A673 (cell line): ENCODE measurements at regions of chr1 and their contacts with region 1.

Region 1: GRCh38 chr1:59759156-59759925 is 55.4 kb upstream of the HOOK1 start:
- DNase-seq: peak; percentile 93
- H3K4me3 ChIP-seq: no peak overlapping the region
- H3K27ac ChIP-seq: no peak overlapping the region
- H3K4me1 ChIP-seq: peaks cover 30% of the 10 kb centered on the region
- H3K27me3 ChIP-seq: no peaks in the 10 kb centered on the region
- CTCF ChIP-seq: peak; percentile 97

Region 2: DNA sequence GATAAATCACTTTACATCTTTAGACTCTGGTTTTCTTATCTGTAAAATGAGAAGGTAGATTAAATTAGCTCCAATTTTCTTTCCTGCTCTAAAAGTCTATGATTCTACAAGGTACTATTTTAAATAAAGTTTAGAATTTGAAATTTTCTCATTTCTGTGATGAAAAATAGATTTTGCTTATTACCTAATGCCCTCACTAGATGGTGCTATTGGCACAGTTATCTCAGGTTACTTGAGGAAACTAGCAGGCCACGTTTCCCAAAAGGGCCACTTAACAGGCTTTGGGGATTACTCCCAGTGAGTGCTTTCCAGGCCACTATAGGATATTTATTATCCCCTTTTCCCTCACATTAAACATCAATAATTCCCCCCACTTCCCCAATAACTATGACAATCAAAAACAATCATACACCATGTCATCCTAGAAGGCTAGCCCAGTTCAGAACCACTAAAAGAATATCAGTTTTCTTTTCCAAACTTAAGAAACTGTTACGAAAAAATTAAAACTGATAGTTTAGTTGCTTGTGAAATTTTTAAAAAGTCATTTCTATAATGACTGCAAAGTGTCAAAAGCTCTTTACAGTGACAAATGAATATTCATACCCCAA is 1243.4 kb before region 1 on chr1:
- CTCF ChIA-PET with region 1: no interaction called
- POLR2A ChIA-PET with region 1: no interaction called
- intact Hi-C with region 1: loop called (anchors 5 kb)
- DNase-seq: peak; percentile 87
- H3K4me3 ChIP-seq: no peak overlapping the region
- H3K27ac ChIP-seq: no peak overlapping the region
- H3K4me1 ChIP-seq: peaks cover 5% of the 10 kb centered on the region
- H3K27me3 ChIP-seq: no peaks in the 10 kb centered on the region
- CTCF ChIP-seq: peak; percentile 76

Region 3: GRCh38 chr1:58739856-58740466 is 1019.4 kb before region 1 on chr1:
- CTCF ChIA-PET with region 1: no interaction called
- POLR2A ChIA-PET with region 1: no interaction called
- intact Hi-C with region 1: loop called (anchors 5 kb)
- DNase-seq: peak; percentile 82
- H3K4me3 ChIP-seq: no peak overlapping the region
- H3K27ac ChIP-seq: no peak overlapping the region
- H3K4me1 ChIP-seq: peaks cover 4% of the 10 kb centered on the region
- H3K27me3 ChIP-seq: no peaks in the 10 kb centered on the region
- CTCF ChIP-seq: peak; percentile 89

Region 4: GRCh38 chr1:58783993-58784757 is 975.2 kb before region 1 on chr1 and contains the start of gene JUN:
- CTCF ChIA-PET with region 1: no interaction called
- POLR2A ChIA-PET with region 1: no interaction called
- intact Hi-C with region 1: loop called (anchors 1 kb)
- DNase-seq: peak; percentile 99
- H3K4me3 ChIP-seq: peak within 1 kb of the TSS; percentile 63
- H3K27ac ChIP-seq: peak within 1 kb of the TSS; percentile 87
- H3K4me1 ChIP-seq: peaks cover 32% of the 10 kb centered on the region
- H3K27me3 ChIP-seq: peaks cover 3% of the 10 kb centered on the region
- CTCF ChIP-seq: no peak
- total RNA-seq, gene JUN: 16.9 and 24.9 TPM in 2 replicates

Region 5: DNA sequence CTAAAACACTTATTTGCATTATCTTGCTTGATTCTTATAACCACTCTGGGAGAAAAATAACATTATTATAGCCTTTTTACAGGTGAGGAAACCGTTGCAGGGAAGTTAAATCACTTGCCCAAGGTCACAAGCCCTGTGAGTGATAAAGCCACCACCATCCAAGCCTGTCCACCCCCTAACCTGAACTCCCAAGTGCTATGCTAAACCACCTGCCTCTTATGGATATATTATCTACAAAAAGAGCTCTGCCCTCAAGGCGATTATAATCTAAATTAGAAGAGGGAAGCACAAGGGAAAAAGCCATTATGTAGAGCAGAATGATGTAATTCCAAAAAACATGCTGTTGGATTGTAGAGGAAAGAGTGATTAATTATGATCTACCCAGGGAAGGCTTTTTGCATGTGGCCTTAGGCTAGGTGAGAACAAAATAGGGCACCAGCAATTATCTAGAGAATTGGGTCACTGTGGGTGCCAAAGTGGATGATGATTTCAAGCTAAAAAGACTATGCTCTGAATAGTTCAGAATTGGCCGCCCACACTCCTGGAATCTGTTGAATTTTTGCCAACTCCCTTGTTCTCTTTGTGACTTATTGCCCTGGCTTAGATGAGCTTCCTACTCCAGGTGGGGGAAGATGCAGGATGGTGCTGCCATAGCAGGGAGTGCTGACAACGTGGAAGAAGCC is 257.2 kb before region 1 on chr1:
- CTCF ChIA-PET with region 1: no interaction called
- POLR2A ChIA-PET with region 1: interaction called, 11 read pairs
- intact Hi-C with region 1: no loop called
- DNase-seq: peak; percentile 41
- H3K4me3 ChIP-seq: no peak overlapping the region
- H3K27ac ChIP-seq: no peak overlapping the region
- H3K4me1 ChIP-seq: peaks cover 24% of the 10 kb centered on the region
- H3K27me3 ChIP-seq: no peaks in the 10 kb centered on the region
- CTCF ChIP-seq: no peak

Region 6: GRCh38 chr1:59511476-59512465 is 247.6 kb before region 1 on chr1:
- CTCF ChIA-PET with region 1: no interaction called
- POLR2A ChIA-PET with region 1: no interaction called
- intact Hi-C with region 1: loop called (anchors 10 kb)
- DNase-seq: no peak
- H3K4me3 ChIP-seq: no peak overlapping the region
- H3K27ac ChIP-seq: no peak overlapping the region
- H3K4me1 ChIP-seq: no peaks in the 10 kb centered on the region
- H3K27me3 ChIP-seq: no peaks in the 10 kb centered on the region
- CTCF ChIP-seq: no peak

Region 7: DNA sequence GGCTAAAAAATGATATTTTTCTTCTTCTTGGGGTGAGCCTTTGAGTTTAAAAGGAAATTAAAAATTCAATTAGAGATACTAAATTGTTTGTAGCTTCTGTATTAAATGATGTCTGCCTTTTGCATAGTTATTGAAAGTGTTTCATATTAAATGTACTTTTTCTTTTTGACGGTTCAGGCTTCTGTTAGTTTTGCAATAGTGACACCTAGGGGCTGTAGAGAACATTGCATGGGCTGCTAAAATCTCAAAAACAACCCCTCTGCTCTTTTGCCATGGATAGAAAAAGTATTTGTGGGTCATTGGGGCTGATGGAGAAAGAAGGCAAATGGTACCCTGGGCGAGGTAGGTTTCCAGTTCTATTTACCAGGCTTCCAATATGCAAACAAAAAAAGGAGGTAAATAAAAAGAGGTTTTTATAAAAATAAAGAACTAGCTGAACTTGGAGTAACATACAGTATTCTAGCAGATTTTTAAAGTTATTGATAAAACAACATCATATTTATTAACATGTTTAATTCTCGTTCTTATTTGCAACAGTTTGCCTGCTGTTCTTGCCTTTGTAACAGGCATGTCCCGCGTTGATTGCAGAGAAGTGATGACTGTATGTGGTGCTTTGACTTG is 60.0 kb before region 1 on chr1:
- CTCF ChIA-PET with region 1: interaction called, 4 read pairs
- POLR2A ChIA-PET with region 1: no interaction called
- intact Hi-C with region 1: loop called (anchors 5 kb)
- DNase-seq: peak; percentile 69
- H3K4me3 ChIP-seq: no peak overlapping the region
- H3K27ac ChIP-seq: no peak overlapping the region
- H3K4me1 ChIP-seq: no peaks in the 10 kb centered on the region
- H3K27me3 ChIP-seq: no peaks in the 10 kb centered on the region
- CTCF ChIP-seq: peak; percentile 93

Region 8: GRCh38 chr1:60213253-60213652 is 453.9 kb after region 1 on chr1:
- CTCF ChIA-PET with region 1: no interaction called
- POLR2A ChIA-PET with region 1: no interaction called
- intact Hi-C with region 1: no loop called
- DNase-seq: no peak
- H3K4me3 ChIP-seq: no peak overlapping the region
- H3K27ac ChIP-seq: no peak overlapping the region
- H3K4me1 ChIP-seq: no peaks in the 10 kb centered on the region
- H3K27me3 ChIP-seq: peaks cover 12% of the 10 kb centered on the region
- CTCF ChIP-seq: no peak